CD4-positive, alpha-beta memory T cell (primary cell): ENCODE measurements at regions of chr5 and their contacts with region 1.

Region 1: DNA sequence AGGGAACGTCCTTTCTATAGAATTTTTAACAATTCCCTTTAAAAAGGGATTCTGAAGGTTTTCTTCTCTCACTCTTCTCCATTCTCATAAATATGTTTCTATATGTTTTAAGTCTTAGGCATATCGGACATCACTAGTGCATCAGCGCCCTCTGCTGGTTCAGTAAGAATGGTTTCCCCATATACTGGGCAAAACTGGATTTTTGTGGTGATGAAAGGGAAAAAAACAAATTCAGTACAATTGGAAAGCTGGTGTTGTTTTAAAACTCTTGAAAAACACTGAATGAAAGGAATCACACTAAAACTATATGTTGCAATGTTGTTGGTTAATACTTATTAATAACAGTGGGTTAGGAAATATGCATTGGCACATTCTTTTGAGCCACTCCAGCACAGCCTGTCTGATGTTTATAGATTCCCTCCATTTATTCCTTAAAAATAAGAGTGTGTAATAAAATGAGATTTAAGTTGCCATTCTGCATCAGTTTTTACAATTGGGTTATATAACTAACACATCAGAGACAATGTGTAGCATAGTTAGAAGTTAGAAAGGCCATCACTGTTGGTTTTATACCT is 15.8 kb downstream of the CWC27 start:
- DNase-seq: peak; percentile 65 to 72 (median 69)
- H3K4me3 ChIP-seq: no peak overlapping the region
- H3K4me3 Mint-ChIP-seq: no peak overlapping the region
- H3K27ac ChIP-seq: no peak overlapping the region
- H3K27ac Mint-ChIP-seq: no peak overlapping the region
- H3K4me1 ChIP-seq: no peaks in the 10 kb centered on the region
- H3K4me1 Mint-ChIP-seq: peaks cover 6 to 9% (median 6%) of the 10 kb centered on the region in 4 donors
- H3K27me3 ChIP-seq: no peaks in the 10 kb centered on the region
- H3K27me3 Mint-ChIP-seq: no peaks in the 10 kb centered on the region

Region 2: DNA sequence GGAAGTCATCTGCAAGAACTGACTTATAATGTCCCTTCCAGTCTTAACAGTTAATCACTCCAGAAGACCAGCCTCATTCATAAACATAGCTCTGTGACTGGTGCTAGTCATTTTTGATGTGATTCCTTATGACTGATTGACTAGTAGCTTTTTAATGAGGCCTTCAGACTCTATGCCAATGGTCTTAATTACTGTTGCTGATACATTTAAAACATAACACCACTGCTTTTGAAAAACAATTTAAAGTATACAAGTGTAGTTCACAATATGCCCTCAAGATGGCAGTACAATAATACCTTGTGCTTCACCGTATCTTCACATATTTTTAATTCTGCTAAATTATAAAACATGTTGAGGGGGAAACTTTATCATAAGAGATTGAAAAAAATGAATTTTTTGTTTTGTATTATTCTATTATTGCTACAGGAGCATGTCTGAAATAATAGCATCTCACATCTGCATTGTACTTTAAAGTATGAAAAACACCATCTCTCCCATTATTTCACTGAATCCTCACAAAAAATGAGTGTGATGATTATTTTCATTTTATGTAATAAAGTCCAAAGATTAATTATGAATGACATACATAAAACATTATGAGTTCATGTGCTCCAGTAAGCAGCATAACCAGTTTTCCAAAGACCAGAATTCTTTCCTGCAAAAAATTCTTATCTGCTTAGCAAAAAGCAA is 149.4 kb before region 1 on chr5:
- CTCF ChIA-PET with region 1: interaction called, 61 read pairs
- POLR2A ChIA-PET with region 1: no interaction called
- intact Hi-C with region 1: loop called (anchors 1 kb)
- DNase-seq: peak in 4 of 5 donors; percentile 23 to 34 (median 28)
- H3K4me3 ChIP-seq: no peak overlapping the region
- H3K4me3 Mint-ChIP-seq: no peak overlapping the region
- H3K27ac ChIP-seq: no peak overlapping the region
- H3K27ac Mint-ChIP-seq: no peak overlapping the region
- H3K4me1 ChIP-seq: no peaks in the 10 kb centered on the region
- H3K4me1 Mint-ChIP-seq: peaks cover 0 to 5% (median 2%) of the 10 kb centered on the region in 4 donors
- H3K27me3 ChIP-seq: no peaks in the 10 kb centered on the region
- H3K27me3 Mint-ChIP-seq: peaks cover 14 to 20% of the 10 kb centered on the region in 2 donors

Region 3: GRCh38 chr5:64768358-64769312 is 15.9 kb before region 1 on chr5 and contains the starts of genes CWC27 and SREK1IP1:
- CTCF ChIA-PET with region 1: interaction called, 24 read pairs
- POLR2A ChIA-PET with region 1: interaction called, 3 read pairs
- intact Hi-C with region 1: no loop called
- DNase-seq: peak; percentile 85 to 88 (median 85)
- H3K4me3 ChIP-seq: peak within 1 kb of the TSS; percentile 83 to 94
- H3K4me3 Mint-ChIP-seq: peak within 1 kb of the TSS; percentile 98 to 100 (median 100)
- H3K27ac ChIP-seq: peak within 1 kb of the TSS; percentile 86
- H3K27ac Mint-ChIP-seq: peak within 1 kb of the TSS; percentile 95 to 100 (median 98)
- H3K4me1 ChIP-seq: peaks cover 47% of the 10 kb centered on the region
- H3K4me1 Mint-ChIP-seq: peaks cover 49 to 82% (median 57%) of the 10 kb centered on the region in 4 donors
- H3K27me3 ChIP-seq: no peaks in the 10 kb centered on the region
- H3K27me3 Mint-ChIP-seq: no peaks in the 10 kb centered on the region
- total RNA-seq, gene CWC27: 16.8 to 17.8 TPM
- total RNA-seq, gene SREK1IP1: 18.4 to 20.2 TPM